ENCODE measurements at regions of chr10 and their contacts with region 1.

Region 1: GRCh38 chr10:109883859-109884771 is 39.2 kb downstream of the XPNPEP1 start:
- DNase-seq: peak; percentile 80
- H3K4me3 ChIP-seq: peak overlapping the region in 1 of 2 experiments; percentile 1; a peak in 1 of 4 replicates
- H3K27ac ChIP-seq: peak overlapping the region; percentile 53 to 77; a peak in 3 of 4 replicates
- H3K4me1 ChIP-seq: peaks cover 3 to 5% of the 10 kb centered on the region in 2 experiments; a peak in 2 of 4 replicates
- H3K27me3 ChIP-seq: no peaks in the 10 kb centered on the region
- CTCF ChIP-seq: peak; percentile 98
- EP300 ChIP-seq: no peak
- RAD21 ChIP-seq: peak; percentile 100

Region 2: DNA sequence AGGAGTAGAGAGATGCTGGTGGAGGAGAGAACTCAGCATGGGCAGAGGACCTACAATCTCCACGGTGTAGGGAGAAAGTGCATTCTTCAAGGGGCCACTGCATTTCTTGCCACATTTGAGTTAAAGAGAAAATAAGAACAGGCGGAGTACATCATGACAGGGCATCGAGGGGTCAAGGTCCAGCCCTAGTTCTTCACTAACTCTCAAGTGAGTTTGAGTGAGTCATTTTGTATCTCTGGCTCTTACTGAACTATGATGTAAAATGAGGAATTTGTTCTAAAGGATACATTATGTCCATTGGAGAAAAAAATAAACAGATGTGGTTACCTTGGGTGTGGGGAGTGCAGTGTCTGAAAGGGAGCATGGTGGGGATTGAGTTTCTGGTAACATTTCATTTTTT is 143.7 kb before region 1 on chr10:
- CTCF ChIA-PET with region 1: no interaction called
- POLR2A ChIA-PET with region 1: no interaction called
- DNase-seq: no peak
- H3K4me3 ChIP-seq: no peak overlapping the region
- H3K27ac ChIP-seq: no peak overlapping the region
- H3K4me1 ChIP-seq: no peaks in the 10 kb centered on the region
- H3K27me3 ChIP-seq: no peaks in the 10 kb centered on the region
- CTCF ChIP-seq: no peak
- EP300 ChIP-seq: no peak
- RAD21 ChIP-seq: no peak

Region 3: DNA sequence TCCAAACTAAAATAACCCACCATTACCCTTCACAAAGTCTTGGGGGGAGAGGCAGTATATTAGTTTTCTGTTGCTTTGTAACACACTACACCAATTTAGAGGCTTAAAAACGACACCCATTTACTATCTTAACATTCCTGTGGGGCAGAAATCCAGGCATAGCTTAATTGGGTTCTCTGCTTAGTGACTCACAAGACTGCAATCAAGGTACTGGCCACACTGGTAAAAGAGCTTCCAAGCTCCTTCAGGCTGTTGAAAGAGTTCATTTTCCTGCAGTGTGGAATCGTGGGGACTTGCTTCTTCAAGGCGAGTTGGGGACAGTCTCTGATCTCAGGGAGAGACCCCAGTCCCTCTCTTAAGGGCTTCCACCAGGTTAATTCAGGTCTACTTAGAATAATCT is 99.9 kb before region 1 on chr10:
- CTCF ChIA-PET with region 1: no interaction called
- POLR2A ChIA-PET with region 1: no interaction called
- DNase-seq: no peak
- H3K4me3 ChIP-seq: no peak overlapping the region
- H3K27ac ChIP-seq: no peak overlapping the region
- H3K4me1 ChIP-seq: no peaks in the 10 kb centered on the region
- H3K27me3 ChIP-seq: no peaks in the 10 kb centered on the region
- CTCF ChIP-seq: no peak
- EP300 ChIP-seq: no peak
- RAD21 ChIP-seq: no peak

Region 4: GRCh38 chr10:109902934-109903589 is 18.9 kb after region 1 on chr10:
- CTCF ChIA-PET with region 1: interaction called, 61 read pairs
- POLR2A ChIA-PET with region 1: no interaction called
- DNase-seq: no peak
- H3K4me3 ChIP-seq: no peak overlapping the region
- H3K27ac ChIP-seq: peak overlapping the region in 1 of 2 experiments; percentile 18; a peak in 1 of 4 replicates
- H3K4me1 ChIP-seq: peaks cover 3 to 15% of the 10 kb centered on the region in 2 experiments; a peak in 2 of 4 replicates
- H3K27me3 ChIP-seq: no peaks in the 10 kb centered on the region
- CTCF ChIP-seq: no peak
- EP300 ChIP-seq: no peak
- RAD21 ChIP-seq: no peak

Region 5: GRCh38 chr10:109956454-109957091 is 72.5 kb after region 1 on chr10:
- CTCF ChIA-PET with region 1: interaction called, 13 read pairs
- POLR2A ChIA-PET with region 1: no interaction called
- DNase-seq: peak; percentile 66
- H3K4me3 ChIP-seq: peak overlapping the region in 1 of 2 experiments; percentile 19; a peak in 1 of 4 replicates
- H3K27ac ChIP-seq: no peak overlapping the region; a peak in 1 of 4 replicates
- H3K4me1 ChIP-seq: peaks cover 2 to 8% of the 10 kb centered on the region in 2 experiments; a peak in 3 of 4 replicates
- H3K27me3 ChIP-seq: no peaks in the 10 kb centered on the region
- CTCF ChIP-seq: peak; percentile 74
- EP300 ChIP-seq: no peak
- RAD21 ChIP-seq: peak; percentile 71

Region 6: GRCh38 chr10:110007701-110008517 is 123.8 kb after region 1 on chr10 and contains the start of gene ADD3:
- CTCF ChIA-PET with region 1: interaction called, 70 read pairs
- POLR2A ChIA-PET with region 1: interaction called, 4 read pairs
- DNase-seq: peak; percentile 99
- H3K4me3 ChIP-seq: peak within 1 kb of the TSS; percentile 72 to 89
- H3K27ac ChIP-seq: peak within 1 kb of the TSS; percentile 68 to 94
- H3K4me1 ChIP-seq: peaks cover 32 to 34% of the 10 kb centered on the region in 2 experiments; a peak in 3 of 4 replicates
- H3K27me3 ChIP-seq: no peaks in the 10 kb centered on the region
- CTCF ChIP-seq: no peak
- EP300 ChIP-seq: 0 out of 4 replicates have a peak, but pooled peaks of 1 of the 2 experiments have one; percentile 14
- RAD21 ChIP-seq: no peak
- polyA plus RNA-seq, gene ADD3: 27.6 and 144 TPM in 2 replicates

Region 7: DNA sequence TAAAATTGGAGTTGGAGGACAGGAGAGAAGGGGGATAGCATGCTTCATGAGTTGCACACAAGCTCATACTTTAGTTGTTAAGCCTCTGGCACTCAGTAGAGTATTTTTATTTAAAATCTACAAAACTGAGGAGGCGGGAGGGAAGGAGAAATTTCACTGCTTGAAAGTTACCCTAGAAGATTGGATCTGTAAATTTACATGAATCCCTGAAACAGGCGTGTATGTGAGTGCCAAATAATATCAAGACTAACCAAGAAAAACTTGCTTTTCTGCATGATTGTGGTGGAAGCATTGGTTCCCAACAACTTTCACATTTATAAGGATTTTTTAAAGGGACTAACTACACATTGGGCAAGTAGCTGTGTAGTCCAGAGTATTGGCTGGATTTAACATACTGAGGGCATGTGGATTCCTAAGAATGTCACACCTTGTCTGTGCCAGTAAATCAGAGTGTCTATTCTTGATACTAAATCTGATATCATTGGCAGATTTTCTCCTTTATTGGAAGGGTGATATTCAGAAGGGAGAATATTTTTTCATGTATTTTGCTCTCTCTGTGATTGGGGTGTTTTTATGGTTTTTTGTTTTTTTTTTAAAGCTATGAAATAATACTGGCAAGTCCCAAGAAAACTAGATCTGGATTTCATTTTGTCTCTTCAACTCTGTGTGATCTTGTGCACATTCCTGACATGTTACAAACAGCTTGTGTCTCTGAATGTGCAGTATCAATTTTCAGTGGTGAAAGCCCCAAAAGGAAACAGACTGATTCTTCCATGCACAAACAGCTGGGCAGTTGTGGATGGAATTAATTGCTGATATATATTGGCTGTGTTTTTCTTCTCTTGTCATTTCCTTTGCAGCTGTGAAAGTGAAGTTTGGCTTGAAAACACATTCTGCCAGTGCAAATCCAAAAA is 190.9 kb after region 1 on chr10:
- CTCF ChIA-PET with region 1: interaction called, 11 read pairs
- POLR2A ChIA-PET with region 1: no interaction called
- DNase-seq: no peak
- H3K4me3 ChIP-seq: no peak overlapping the region; a peak in 1 of 4 replicates
- H3K27ac ChIP-seq: peak overlapping the region; percentile 72 to 85
- H3K4me1 ChIP-seq: peaks cover 30 to 56% of the 10 kb centered on the region in 2 experiments
- H3K27me3 ChIP-seq: no peaks in the 10 kb centered on the region
- CTCF ChIP-seq: no peak
- EP300 ChIP-seq: peak in 1 of 2 experiments; percentile 80; a peak in 1 of 4 replicates
- RAD21 ChIP-seq: no peak

Region 8: GRCh38 chr10:110137142-110137545 is 253.0 kb after region 1 on chr10:
- CTCF ChIA-PET with region 1: interaction called, 26 read pairs
- POLR2A ChIA-PET with region 1: no interaction called
- DNase-seq: peak; percentile 59
- H3K4me3 ChIP-seq: no peak overlapping the region
- H3K27ac ChIP-seq: peak overlapping the region in 1 of 2 experiments; percentile 39; a peak in 1 of 4 replicates
- H3K4me1 ChIP-seq: peaks cover 0 to 5% of the 10 kb centered on the region in 2 experiments; a peak in 1 of 4 replicates
- H3K27me3 ChIP-seq: no peaks in the 10 kb centered on the region
- CTCF ChIP-seq: peak; percentile 80
- EP300 ChIP-seq: no peak
- RAD21 ChIP-seq: peak; percentile 89

Region 9: GRCh38 chr10:110225756-110226542 is 341.8 kb after region 1 on chr10:
- CTCF ChIA-PET with region 1: interaction called, 14 read pairs
- POLR2A ChIA-PET with region 1: no interaction called
- DNase-seq: peak; percentile 93
- H3K4me3 ChIP-seq: peak overlapping the region; percentile 71 to 83
- H3K27ac ChIP-seq: peak overlapping the region; percentile 75 to 93; a peak in 3 of 4 replicates
- H3K4me1 ChIP-seq: peaks cover 0 to 10% of the 10 kb centered on the region in 2 experiments; a peak in 2 of 4 replicates
- H3K27me3 ChIP-seq: no peaks in the 10 kb centered on the region
- CTCF ChIP-seq: peak; percentile 64
- EP300 ChIP-seq: no peak
- RAD21 ChIP-seq: peak; percentile 38

Measured in SK-N-SH (cell line).